ENCODE measurements at regions of chr18 and their contacts with region 1.

Region 1: DNA sequence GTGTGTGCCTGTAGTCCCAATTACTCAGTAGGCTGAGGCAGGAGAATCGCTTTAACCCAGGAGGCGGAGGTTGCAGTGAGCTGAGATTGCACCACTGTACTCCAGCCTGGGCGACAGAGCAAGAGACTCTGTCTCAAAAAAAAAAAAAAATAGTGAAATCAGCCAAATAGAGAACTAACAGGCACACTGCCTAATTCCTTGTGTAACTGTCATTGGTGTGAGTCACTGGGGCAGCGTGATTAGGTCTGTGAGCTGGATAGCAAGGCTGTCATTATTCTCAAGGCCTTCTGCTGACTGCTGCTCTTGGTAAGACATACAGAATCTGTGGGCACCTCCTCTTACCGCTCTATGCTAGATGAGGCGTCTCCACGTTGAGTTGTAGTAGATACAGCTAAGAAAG is 270.3 kb downstream of the NEDD4L start:
- DNase-seq: peak; percentile 64 to 79 (median 67)
- ATAC-seq: peak; percentile 86 to 88
- H3K4me3 ChIP-seq: no peak overlapping the region
- H3K27ac ChIP-seq: peak overlapping the region; percentile 61
- H3K4me1 ChIP-seq: peaks cover 12% of the 10 kb centered on the region
- H3K27me3 ChIP-seq: no peaks in the 10 kb centered on the region

Region 2: DNA sequence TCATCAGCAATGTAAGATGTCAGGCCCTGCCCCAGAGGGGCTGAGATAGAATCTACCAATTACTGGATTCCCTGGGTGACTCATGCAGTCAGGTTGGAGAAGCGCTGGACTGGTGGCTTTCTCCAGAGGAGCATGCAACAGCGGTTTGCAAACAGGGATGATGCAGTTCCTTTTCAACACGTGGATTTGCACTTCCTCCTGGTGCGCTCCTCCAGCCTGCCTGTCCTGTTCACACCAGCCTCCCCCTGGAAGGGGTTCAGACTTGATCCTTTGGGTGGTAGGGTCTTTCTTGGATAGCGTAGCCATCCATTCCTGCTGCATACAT is 111.9 kb before region 1 on chr18:
- intact Hi-C with region 1: loop called in 1 of 4 experiments (anchors 10 kb)
- DNase-seq: no peak
- ATAC-seq: peak; percentile 17 to 27
- H3K4me3 ChIP-seq: no peak overlapping the region
- H3K27ac ChIP-seq: no peak overlapping the region
- H3K4me1 ChIP-seq: peaks cover 4% of the 10 kb centered on the region
- H3K27me3 ChIP-seq: no peaks in the 10 kb centered on the region

Region 3: GRCh38 chr18:58257461-58257860 is 56.8 kb before region 1 on chr18:
- intact Hi-C with region 1: loop called in 2 of 4 experiments (anchors 5 to 10 kb)
- DNase-seq: no peak
- ATAC-seq: no peak
- H3K4me3 ChIP-seq: peak overlapping the region; percentile 66
- H3K27ac ChIP-seq: peak overlapping the region; percentile 84
- H3K4me1 ChIP-seq: no peaks in the 10 kb centered on the region
- H3K27me3 ChIP-seq: no peaks in the 10 kb centered on the region

Measured in right cardiac atrium (tissue), 5 donors.